ENCODE measurements at regions of chr10 and their contacts with region 1.

Region 1: GRCh38 chr10:95260397-95260881 is 30.4 kb downstream of the PDLIM1 start:
- DNase-seq: peak; percentile 67
- H3K27ac ChIP-seq: peak overlapping the region; percentile 84
- CTCF ChIP-seq: no peak

Region 2: GRCh38 chr10:95121904-95122303 is 138.5 kb before region 1 on chr10:
- CTCF ChIA-PET with region 1: no interaction called
- POLR2A ChIA-PET with region 1: no interaction called
- DNase-seq: no peak
- H3K27ac ChIP-seq: no peak overlapping the region
- CTCF ChIP-seq: no peak

Region 3: DNA sequence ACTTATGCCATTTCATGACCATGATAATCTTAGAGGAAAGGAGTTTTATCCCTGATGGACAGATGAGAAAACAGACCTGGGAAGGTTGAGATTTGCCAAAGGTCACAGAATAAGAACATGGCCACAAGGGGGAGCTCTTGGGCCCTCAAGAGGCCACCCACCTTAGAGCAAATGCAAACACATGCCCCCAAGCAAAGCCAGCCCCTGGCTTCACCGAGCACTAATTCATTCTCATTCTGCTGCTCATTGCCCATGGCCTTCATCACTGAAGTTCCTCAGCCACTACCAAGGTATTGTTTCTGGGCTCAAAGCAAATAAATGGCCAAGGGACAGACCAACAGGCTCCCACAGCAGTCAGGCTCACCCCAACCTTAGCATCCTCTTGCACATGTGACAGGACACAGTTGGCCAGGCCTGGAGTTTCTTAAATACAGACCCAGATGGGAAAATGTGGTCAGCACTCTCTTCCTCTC is 13.8 kb before region 1 on chr10:
- CTCF ChIA-PET with region 1: interaction called, 10 read pairs
- POLR2A ChIA-PET with region 1: no interaction called
- DNase-seq: no peak
- H3K27ac ChIP-seq: peak overlapping the region; percentile 58
- CTCF ChIP-seq: peak; percentile 83

Measured in RWPE1 (cell line).